ENCODE measurements at regions of chr14 and their contacts with region 1.

Region 1: DNA sequence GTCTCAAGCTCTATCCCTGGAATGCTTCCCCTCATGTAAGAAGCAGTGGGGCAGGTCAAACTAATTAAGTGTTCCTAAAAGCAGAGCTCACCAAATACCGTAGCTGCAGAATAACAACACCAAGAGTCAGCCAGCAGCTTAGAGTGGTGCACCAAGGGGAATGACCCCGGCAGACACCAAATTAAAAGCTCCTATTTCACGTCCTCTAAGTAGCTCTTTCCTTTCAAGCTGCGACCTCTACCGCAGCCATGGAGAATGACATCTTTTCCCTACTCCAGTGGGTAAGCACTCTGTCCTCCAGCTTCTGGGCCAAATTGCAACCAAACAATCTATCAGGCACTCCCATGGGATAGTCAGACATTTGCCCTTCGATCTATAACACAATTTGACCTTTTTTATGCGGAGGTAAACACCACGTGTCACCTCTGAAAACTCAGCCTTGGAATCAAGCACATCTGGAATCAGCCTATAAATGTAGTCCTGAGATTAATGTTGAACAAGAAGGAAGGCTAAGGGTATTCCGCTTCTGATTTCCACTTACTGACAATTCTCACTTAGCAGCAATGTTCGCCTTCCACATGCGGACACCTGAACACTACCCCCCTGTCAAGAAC is 67.6 kb upstream of the CDKN3 start:
- DNase-seq: peak; percentile 51
- H3K4me3 ChIP-seq: no peak overlapping the region
- H3K27ac ChIP-seq: no peak overlapping the region
- H3K4me1 ChIP-seq: peaks cover 10% of the 10 kb centered on the region
- H3K27me3 ChIP-seq: no peaks in the 10 kb centered on the region
- CTCF ChIP-seq: peak; percentile 88 to 94

Region 2: GRCh38 chr14:53432378-53432802 is 896.8 kb before region 1 on chr14:
- CTCF ChIA-PET with region 1: no interaction called
- dilution Hi-C with region 1: no loop called
- in situ Hi-C with region 1: loop called (anchors 25 kb)
- intact Hi-C with region 1: loop called (anchors 5 kb)
- DNase-seq: peak; percentile 37
- H3K4me3 ChIP-seq: no peak overlapping the region
- H3K27ac ChIP-seq: no peak overlapping the region
- H3K4me1 ChIP-seq: no peaks in the 10 kb centered on the region
- H3K27me3 ChIP-seq: no peaks in the 10 kb centered on the region
- CTCF ChIP-seq: peak; percentile 81 to 85

Region 3: DNA sequence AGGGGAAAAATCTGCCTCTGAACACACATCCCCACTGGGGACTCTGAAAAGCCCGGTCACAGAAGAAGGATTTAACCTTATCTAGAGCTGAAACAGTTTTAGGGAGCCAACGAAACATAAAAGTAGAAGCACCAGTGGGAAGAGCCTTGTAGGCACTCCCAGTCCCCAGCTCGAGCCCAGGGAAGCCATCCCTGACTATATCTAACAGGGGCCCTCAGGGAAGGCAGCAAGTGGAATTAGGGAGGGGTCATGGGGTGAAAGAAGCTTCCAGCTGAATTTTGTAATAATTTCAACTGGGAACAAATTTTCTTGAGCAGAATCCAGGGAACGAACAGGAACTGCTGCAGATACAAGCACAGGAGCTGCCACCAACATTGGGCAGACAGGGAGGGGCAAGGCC is 500.4 kb before region 1 on chr14:
- CTCF ChIA-PET with region 1: no interaction called
- dilution Hi-C with region 1: no loop called
- in situ Hi-C with region 1: no loop called
- intact Hi-C with region 1: no loop called
- DNase-seq: no peak
- H3K4me3 ChIP-seq: no peak overlapping the region
- H3K27ac ChIP-seq: no peak overlapping the region
- H3K4me1 ChIP-seq: no peaks in the 10 kb centered on the region
- H3K27me3 ChIP-seq: no peaks in the 10 kb centered on the region
- CTCF ChIP-seq: no peak

Region 4: GRCh38 chr14:53929871-53930715 is 399.1 kb before region 1 on chr14:
- CTCF ChIA-PET with region 1: interaction called, 3 read pairs
- dilution Hi-C with region 1: no loop called
- in situ Hi-C with region 1: loop called (anchors 25 kb)
- intact Hi-C with region 1: no loop called
- DNase-seq: peak; percentile 27
- H3K4me3 ChIP-seq: no peak overlapping the region
- H3K27ac ChIP-seq: no peak overlapping the region
- H3K4me1 ChIP-seq: peaks cover 11% of the 10 kb centered on the region
- H3K27me3 ChIP-seq: no peaks in the 10 kb centered on the region
- CTCF ChIP-seq: peak; percentile 63 to 68

Region 5: GRCh38 chr14:54025661-54026060 is 303.5 kb before region 1 on chr14:
- CTCF ChIA-PET with region 1: interaction called, 5 read pairs
- dilution Hi-C with region 1: no loop called
- in situ Hi-C with region 1: loop called in 1 of 2 experiments (anchors 25 kb)
- intact Hi-C with region 1: loop called (anchors 1 kb)
- DNase-seq: peak; percentile 41
- H3K4me3 ChIP-seq: no peak overlapping the region
- H3K27ac ChIP-seq: no peak overlapping the region
- H3K4me1 ChIP-seq: no peaks in the 10 kb centered on the region
- H3K27me3 ChIP-seq: no peaks in the 10 kb centered on the region
- CTCF ChIP-seq: peak; percentile 60 to 62

Region 6: GRCh38 chr14:54175298-54175942 is 153.8 kb before region 1 on chr14:
- CTCF ChIA-PET with region 1: interaction called, 10 read pairs
- dilution Hi-C with region 1: no loop called
- in situ Hi-C with region 1: loop called in 1 of 2 experiments (anchors 25 kb)
- intact Hi-C with region 1: loop called (anchors 1 kb)
- DNase-seq: peak; percentile 65
- H3K4me3 ChIP-seq: no peak overlapping the region
- H3K27ac ChIP-seq: peak overlapping the region; percentile 8
- H3K4me1 ChIP-seq: peaks cover 20% of the 10 kb centered on the region
- H3K27me3 ChIP-seq: no peaks in the 10 kb centered on the region
- CTCF ChIP-seq: peak; percentile 71 to 82

Region 7: DNA sequence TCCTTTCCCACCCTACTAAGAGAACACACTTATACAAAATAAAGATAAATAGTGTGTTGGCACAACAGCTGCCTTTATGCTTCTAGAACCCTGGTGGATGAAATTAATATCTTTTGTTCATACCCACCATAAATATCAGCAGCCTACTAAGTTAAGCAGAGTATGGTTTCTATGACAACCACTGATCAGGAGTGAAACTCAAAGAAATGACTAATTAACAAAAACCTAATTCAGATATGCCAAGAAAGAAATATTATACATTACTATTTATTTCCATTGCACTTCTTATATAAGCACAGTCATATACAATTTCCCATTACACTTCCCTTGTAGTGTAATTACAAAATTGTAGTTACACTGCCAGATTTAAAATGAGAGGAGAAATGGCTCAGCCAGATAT is 96.5 kb before region 1 on chr14:
- CTCF ChIA-PET with region 1: no interaction called
- dilution Hi-C with region 1: no loop called
- in situ Hi-C with region 1: no loop called
- intact Hi-C with region 1: no loop called
- DNase-seq: no peak
- H3K4me3 ChIP-seq: no peak overlapping the region
- H3K27ac ChIP-seq: no peak overlapping the region
- H3K4me1 ChIP-seq: no peaks in the 10 kb centered on the region
- H3K27me3 ChIP-seq: no peaks in the 10 kb centered on the region
- CTCF ChIP-seq: no peak

Region 8: DNA sequence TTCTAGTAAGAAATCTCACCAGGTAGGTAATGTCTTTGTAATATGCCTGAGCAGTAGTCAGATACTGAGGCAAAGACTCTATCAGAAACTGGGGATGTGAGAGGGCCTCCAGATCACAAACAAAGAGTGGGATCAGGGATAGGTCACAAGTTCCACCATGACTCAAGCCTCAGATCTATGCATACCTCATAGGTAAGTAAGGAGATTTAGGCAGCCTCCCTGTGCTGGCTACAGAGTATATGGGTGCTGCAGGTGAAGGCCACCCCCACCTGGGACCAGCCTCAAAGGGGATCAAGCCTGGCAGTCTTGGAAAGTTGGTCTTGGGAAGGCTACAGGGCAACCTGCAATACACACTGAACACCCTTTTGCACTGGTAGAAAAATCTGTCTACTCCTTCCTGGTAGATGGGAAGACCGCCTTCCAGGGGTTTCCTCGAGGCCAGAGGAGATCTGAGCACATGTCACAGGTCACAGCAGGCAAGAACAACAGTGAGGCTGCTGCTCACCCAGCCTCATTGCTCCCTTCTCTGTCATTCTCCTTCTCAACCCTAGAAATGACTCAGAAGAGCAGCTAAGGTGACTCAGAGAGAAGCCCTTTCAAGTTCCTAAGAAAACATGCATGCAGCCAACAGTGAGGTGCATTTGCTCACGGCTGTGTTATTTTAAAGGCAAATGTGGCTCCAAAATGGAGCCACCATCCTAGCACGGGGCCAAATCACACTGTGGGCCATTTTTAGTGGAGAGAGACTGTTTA is 75.8 kb before region 1 on chr14:
- CTCF ChIA-PET with region 1: interaction called, 11 read pairs
- dilution Hi-C with region 1: no loop called
- in situ Hi-C with region 1: no loop called
- intact Hi-C with region 1: loop called (anchors 1 kb)
- DNase-seq: peak; percentile 89
- H3K4me3 ChIP-seq: no peak overlapping the region
- H3K27ac ChIP-seq: peak overlapping the region; percentile 93
- H3K4me1 ChIP-seq: peaks cover 33% of the 10 kb centered on the region
- H3K27me3 ChIP-seq: no peaks in the 10 kb centered on the region
- CTCF ChIP-seq: no peak

Region 9: DNA sequence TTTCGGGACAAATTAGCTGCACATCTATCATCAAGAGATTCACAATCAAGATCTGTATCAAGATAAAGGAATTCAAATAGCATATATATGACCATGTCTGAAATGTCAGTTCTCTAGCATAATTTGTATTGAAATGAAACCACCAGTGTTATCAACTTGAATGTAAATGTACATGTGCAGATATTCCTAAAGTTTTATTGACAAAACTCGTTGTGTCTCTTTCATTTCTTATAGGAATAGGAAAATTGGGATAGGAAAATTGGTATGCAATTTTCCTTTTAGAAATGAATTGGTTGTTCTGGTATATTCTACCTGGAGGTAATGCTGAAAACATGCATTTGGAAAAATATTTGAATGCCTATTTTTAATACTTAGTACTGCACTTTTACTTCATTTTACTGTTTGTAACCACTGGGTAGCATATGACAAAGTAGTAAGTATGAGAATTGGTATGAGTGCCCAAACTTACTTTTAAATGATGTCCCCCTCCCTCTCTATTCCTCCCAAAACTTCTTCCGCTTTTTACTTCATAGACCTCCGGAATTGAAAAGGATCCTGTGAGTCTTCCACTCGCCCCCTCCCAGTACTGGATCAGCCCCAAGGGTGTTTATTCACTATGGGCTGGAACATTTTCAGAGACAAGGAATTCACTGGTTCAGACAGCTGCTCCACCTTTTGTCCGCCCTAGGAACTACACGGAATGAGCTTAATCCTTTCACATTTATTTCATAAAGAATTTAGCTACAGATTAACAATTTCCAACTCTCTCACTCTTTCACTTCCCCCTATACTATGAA is 91.0 kb after region 1 on chr14:
- CTCF ChIA-PET with region 1: no interaction called
- dilution Hi-C with region 1: no loop called
- in situ Hi-C with region 1: no loop called
- intact Hi-C with region 1: no loop called
- DNase-seq: peak; percentile 34
- H3K4me3 ChIP-seq: no peak overlapping the region
- H3K27ac ChIP-seq: no peak overlapping the region
- H3K4me1 ChIP-seq: no peaks in the 10 kb centered on the region
- H3K27me3 ChIP-seq: no peaks in the 10 kb centered on the region
- CTCF ChIP-seq: peak; percentile 57 to 69

Region 10: GRCh38 chr14:54908190-54908589 is 579.0 kb after region 1 on chr14:
- CTCF ChIA-PET with region 1: no interaction called
- dilution Hi-C with region 1: no loop called
- in situ Hi-C with region 1: no loop called
- intact Hi-C with region 1: no loop called
- DNase-seq: no peak
- H3K4me3 ChIP-seq: no peak overlapping the region
- H3K27ac ChIP-seq: no peak overlapping the region
- H3K4me1 ChIP-seq: no peaks in the 10 kb centered on the region
- H3K27me3 ChIP-seq: no peaks in the 10 kb centered on the region
- CTCF ChIP-seq: no peak